ENCODE measurements at regions of chrX and their contacts with region 1.

Region 1: GRCh38 chrX:75156021-75156945 is at the start of gene ABCB7:
- DNase-seq: peak; percentile 77
- H3K4me3 ChIP-seq: peak within 1 kb of the TSS; percentile 86
- H3K27ac ChIP-seq: peak within 1 kb of the TSS; percentile 71
- H3K4me1 ChIP-seq: peaks cover 11% of the 10 kb centered on the region
- CTCF ChIP-seq: no peak
- total RNA-seq, gene ABCB7: 18.0 and 26.7 TPM in 2 replicates

Region 2: DNA sequence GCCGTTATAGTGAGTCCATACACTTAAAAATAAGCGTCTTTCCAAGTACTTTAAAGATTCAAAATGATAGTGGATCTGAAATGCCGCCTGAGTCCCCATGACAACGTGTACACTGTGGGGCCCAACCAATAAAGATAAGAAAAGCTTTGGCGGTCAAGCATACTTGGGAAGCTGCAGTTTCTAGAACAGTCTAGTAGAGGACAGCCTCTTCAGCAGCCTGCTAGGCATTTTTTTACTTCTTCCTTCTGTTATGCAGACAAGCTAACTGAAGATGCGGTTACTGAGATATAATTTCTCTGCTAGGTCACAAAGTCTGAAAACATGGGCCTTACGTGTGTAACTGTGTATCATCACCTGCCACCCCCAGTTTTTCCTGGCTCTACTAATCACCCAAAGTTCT is 117.2 kb after region 1 on chrX:
- CTCF ChIA-PET with region 1: no interaction called
- POLR2A ChIA-PET with region 1: interaction called, 4 read pairs
- intact Hi-C with region 1: loop called (anchors 10 kb)
- DNase-seq: no peak
- H3K4me3 ChIP-seq: peak overlapping the region; percentile 97
- H3K27ac ChIP-seq: peak overlapping the region; percentile 84
- H3K4me1 ChIP-seq: peaks cover 8% of the 10 kb centered on the region
- CTCF ChIP-seq: no peak